Brain microvascular endothelial cell (primary cell): ENCODE measurements at regions of chr20 and their contacts with region 1.

Region 1: GRCh38 chr20:35883778-35884540 is 70.3 kb downstream of the SCAND1 start:
- DNase-seq: peak; percentile 100
- H3K4me3 ChIP-seq: peak overlapping the region; percentile 31
- H3K27ac ChIP-seq: peak overlapping the region; percentile 96
- H3K27me3 ChIP-seq: no peaks in the 10 kb centered on the region
- CTCF ChIP-seq: peak; percentile 81

Region 2: GRCh38 chr20:35741892-35742740 is 141.8 kb before region 1 on chr20 and contains the start of gene RBM39:
- in situ Hi-C with region 1: loop called (anchors 25 kb)
- DNase-seq: peak; percentile 100
- H3K4me3 ChIP-seq: peak within 1 kb of the TSS; percentile 96
- H3K27ac ChIP-seq: peak within 1 kb of the TSS; percentile 100
- H3K27me3 ChIP-seq: no peaks in the 10 kb centered on the region
- CTCF ChIP-seq: peak; percentile 63